ENCODE measurements at regions of chr6 and their contacts with region 1.

Region 1: DNA sequence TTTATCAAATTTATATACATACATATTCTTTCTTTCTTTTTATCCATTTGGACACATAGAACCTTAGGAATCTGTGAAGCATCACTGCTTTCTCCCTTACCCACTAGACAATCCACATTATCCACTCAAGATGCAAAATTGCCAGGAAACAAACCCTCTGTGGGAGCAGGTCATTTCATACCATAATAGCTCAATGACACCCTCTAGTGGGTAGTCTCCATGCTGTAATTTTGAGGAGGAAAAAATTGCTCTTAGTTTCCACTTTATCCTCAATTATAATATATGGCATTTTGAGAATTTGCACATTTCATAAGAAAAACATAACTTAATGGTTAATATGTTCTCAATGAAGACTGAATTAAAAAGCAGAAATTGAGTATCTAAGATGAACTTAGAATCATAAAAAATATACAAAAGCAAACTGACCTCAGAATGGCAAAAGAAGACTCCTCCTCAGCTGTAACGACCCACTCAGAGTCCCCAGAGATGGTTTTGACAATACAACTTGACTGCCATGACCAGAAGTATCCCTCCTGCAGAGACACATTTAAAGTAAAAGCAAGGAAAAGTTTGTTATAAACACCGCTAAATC is 164.1 kb downstream of the FRK start:
- DNase-seq: peak; percentile 30
- H3K4me3 ChIP-seq: no peak overlapping the region
- H3K27ac ChIP-seq: no peak overlapping the region
- H3K4me1 ChIP-seq: no peaks in the 10 kb centered on the region
- CTCF ChIP-seq: peak; percentile 92

Region 2: GRCh38 chr6:114747987-114748630 is 1148.5 kb before region 1 on chr6:
- CTCF ChIA-PET with region 1: no interaction called
- POLR2A ChIA-PET with region 1: no interaction called
- intact Hi-C with region 1: loop called (anchors 5 kb)
- DNase-seq: peak; percentile 48
- H3K4me3 ChIP-seq: no peak overlapping the region
- H3K27ac ChIP-seq: no peak overlapping the region
- H3K4me1 ChIP-seq: no peaks in the 10 kb centered on the region
- CTCF ChIP-seq: peak; percentile 94

Region 3: GRCh38 chr6:115945306-115945705 is 48.7 kb after region 1 on chr6:
- CTCF ChIA-PET with region 1: no interaction called
- POLR2A ChIA-PET with region 1: no interaction called
- intact Hi-C with region 1: no loop called
- DNase-seq: no peak
- H3K4me3 ChIP-seq: no peak overlapping the region
- H3K27ac ChIP-seq: no peak overlapping the region
- H3K4me1 ChIP-seq: no peaks in the 10 kb centered on the region
- CTCF ChIP-seq: no peak

Measured in OCI-LY7 (cell line).